Right ventricle myocardium inferior (tissue), 1 donor: ENCODE measurements at regions of chr10 and their contacts with region 1.

Region 1: GRCh38 chr10:76231286-76231934 is 800.0 kb downstream of the LRMDA start:
- DNase-seq: no peak
- ATAC-seq: no peak

Region 2: GRCh38 chr10:76177945-76178344 is 53.5 kb before region 1 on chr10:
- intact Hi-C with region 1: no loop called
- DNase-seq: no peak
- ATAC-seq: no peak

Region 3: DNA sequence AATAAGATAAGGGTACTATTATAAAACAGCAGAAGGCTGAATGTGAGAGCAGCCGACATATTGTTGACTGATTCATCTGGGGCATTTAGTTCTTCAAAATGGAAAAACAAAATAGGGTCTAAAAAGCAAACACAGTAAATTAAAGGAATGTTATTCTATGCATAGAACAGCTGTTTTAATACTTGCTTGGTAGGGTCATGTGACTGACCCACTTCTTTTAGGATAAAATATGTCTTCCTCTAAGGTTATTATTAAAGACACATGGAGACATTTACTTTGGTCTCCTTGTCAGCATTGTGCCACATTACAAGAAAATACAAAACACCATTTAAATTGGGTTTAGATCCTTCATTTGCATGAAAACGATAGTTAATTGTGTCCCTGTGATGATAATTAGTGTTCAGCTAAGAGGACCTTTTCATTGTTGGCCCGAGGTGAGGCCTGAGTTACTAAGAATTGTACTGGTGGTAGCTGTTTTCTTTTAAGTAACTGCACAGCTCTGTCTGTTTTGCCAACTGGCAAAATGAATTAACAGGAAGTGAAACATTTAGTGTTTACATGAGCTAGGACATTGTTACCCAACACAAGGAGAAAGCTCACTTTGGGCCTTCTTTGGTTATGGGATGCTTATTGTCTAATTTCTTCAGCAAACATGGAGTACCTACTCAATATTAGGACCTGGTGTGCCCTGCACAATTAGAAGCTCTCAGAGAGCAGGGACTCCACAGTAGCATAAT is 35.6 kb before region 1 on chr10:
- intact Hi-C with region 1: loop called (anchors 1 kb)
- DNase-seq: no peak
- ATAC-seq: peak; percentile 31

Region 4: DNA sequence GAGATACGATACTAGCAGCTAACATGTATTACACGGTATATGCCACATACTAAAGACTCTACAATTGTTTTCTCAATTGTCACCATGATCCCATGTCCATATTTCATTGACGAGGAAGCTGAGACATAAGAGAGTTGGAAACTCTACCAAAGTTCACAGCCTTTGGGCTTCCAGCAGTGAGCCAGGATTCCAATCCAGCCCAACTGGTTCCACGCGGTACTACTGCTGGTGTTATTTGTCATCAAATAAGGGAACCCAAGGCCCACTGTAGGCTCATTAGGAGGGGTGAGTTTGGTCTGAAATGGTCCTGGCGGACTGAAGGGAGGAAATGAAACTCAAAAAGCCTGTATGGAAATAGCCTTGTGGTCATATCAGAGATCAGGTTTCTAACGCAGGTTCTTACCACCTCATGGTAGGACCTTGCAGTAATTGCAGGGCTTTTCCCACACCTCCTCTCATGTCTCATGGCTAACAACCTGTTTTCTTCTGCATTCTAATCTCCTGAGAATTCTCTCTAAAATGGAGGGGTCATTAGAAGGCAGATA is 14.6 kb after region 1 on chr10:
- intact Hi-C with region 1: loop called (anchors 1 kb)
- DNase-seq: no peak
- ATAC-seq: no peak

Region 5: DNA sequence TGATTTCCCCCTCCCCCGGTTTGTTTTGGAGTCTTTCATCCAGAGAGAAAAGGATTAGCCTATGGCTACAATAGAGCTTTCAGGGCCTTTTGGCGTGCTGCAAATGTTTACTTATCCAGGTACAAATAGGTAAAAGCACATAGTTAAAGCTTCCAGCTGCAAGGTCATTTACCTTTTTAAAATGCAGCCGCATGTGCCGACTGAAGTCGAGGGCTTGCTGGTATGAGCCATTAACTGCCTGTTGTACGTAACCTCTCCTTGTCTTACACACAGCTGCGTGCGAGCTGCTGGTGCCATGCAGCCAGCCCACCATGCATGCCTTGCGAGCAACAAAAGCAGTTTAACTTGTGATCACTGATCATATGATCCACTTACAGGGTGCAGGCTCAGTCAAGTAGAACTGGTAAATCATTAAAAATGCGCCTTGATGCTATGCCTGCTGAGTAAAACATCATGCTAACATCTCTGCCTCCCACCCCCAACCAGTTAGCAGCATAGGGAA is 66.4 kb after region 1 on chr10:
- intact Hi-C with region 1: no loop called
- DNase-seq: no peak
- ATAC-seq: no peak